ENCODE measurements at regions of chr2 and their contacts with region 1.

Region 1: DNA sequence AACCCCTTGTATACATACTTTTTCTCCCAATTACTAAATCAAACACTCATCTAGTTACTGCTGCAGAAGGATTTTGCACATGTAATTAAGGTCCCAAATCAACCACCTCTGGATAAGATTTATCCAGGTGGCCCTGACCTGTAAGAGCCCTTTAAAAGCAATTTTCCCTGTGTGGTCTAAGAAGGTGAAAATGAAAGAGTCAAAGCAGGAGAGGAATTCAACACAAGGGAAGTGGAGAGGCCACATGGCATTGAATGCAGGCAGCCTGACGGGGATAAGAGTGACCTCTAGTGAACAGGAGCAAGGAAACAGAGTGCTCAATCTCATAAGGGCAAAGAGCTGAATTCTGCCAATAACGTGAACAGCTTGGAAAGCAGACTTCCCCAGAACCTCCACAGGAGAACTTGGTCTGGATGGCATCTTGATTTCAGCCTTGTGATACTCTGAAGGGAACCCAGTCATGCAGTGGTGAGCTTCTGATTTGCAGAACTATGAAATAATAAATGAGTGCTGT is 27.2 kb downstream of the PPP3R1 start:
- DNase-seq: peak; percentile 48
- ATAC-seq: peak; percentile 77
- H3K4me3 ChIP-seq: no peak overlapping the region
- H3K27ac ChIP-seq: no peak overlapping the region
- H3K4me1 ChIP-seq: no peaks in the 10 kb centered on the region
- H3K27me3 ChIP-seq: no peaks in the 10 kb centered on the region
- CTCF ChIP-seq: peak; percentile 61

Region 2: GRCh38 chr2:68244456-68244855 is 19.3 kb after region 1 on chr2:
- CTCF ChIA-PET with region 1: no interaction called
- POLR2A ChIA-PET with region 1: interaction called, 19 read pairs
- intact Hi-C with region 1: no loop called
- DNase-seq: no peak
- ATAC-seq: no peak
- H3K4me3 ChIP-seq: no peak overlapping the region
- H3K27ac ChIP-seq: no peak overlapping the region
- H3K4me1 ChIP-seq: peaks cover 22% of the 10 kb centered on the region
- H3K27me3 ChIP-seq: no peaks in the 10 kb centered on the region
- CTCF ChIP-seq: 0 out of 2 replicates have a peak, but pooled peaks have one; percentile 14